Activated CD4-positive, alpha-beta T cell treated with anti-CD3 and anti-CD28 coated beads, Interleukin-2, amount 10 ng/mL, durations not matched to agents 24 days and 14 days (primary cell): ENCODE measurements at regions of chr6 and their contacts with region 1.

Region 1: GRCh38 chr6:21593412-21593926 is at the start of gene SOX4:
- DNase-seq: peak; percentile 88
- H3K4me3 Mint-ChIP-seq: peak within 1 kb of the TSS; percentile 83
- H3K27ac Mint-ChIP-seq: peak within 1 kb of the TSS; percentile 85
- H3K4me1 Mint-ChIP-seq: peaks cover 21% of the 10 kb centered on the region
- H3K27me3 Mint-ChIP-seq: peaks cover 45% of the 10 kb centered on the region
- total RNA-seq, gene SOX4: 0.79 and 0.95 TPM in 2 replicates

Region 2: GRCh38 chr6:20291764-20292580 is 1301.5 kb before region 1 on chr6:
- intact Hi-C with region 1: loop called (anchors 5 kb)
- DNase-seq: peak; percentile 93
- H3K4me3 Mint-ChIP-seq: peak overlapping the region; percentile 9
- H3K27ac Mint-ChIP-seq: peak overlapping the region; percentile 2
- H3K4me1 Mint-ChIP-seq: peaks cover 35% of the 10 kb centered on the region
- H3K27me3 Mint-ChIP-seq: peaks cover 7% of the 10 kb centered on the region

Region 3: DNA sequence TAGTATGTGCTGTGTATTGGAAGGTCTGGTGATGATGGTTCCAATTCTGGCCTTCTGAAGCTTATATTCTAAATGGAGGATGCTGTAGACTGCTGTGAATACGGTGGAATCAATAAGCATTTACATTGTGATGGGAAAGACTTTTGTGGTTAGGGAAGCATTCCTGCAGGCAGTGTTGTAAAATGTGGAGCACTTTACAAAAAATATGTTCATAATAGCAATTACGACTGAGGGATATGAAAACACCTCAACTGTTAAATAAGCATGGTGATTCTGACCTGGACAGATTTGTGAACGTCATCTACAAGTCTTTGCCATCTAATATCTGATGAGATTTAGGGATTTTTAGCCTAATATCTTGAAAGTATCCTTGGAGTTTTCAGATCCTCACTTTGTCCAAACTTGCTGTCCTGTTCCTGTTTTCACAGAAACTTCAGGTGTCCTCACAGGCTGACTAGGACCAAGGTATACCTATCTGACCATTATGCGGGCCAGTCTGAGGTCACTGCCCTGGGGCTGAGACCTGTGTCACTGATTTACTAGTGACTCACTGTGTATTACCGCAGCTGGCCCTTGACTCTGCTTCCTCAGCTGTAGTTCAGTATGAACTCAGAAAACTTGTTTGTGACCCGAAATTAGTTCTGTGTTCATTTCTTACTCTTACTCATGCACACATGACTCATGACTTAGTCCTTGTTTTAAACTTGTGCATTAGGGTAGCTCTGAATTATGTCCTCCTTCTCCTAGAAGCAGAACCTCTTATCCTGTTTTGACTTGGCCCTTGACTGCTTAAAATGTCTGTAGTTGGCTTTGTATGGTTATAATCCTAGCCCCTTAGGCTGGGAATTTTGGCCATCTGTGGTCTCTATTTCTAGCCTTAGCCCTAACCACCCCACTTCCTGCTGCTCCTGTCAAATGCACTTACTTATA is 716.2 kb before region 1 on chr6:
- intact Hi-C with region 1: loop called (anchors 2 kb)
- DNase-seq: peak; percentile 60
- H3K4me3 Mint-ChIP-seq: no peak overlapping the region
- H3K27ac Mint-ChIP-seq: peak overlapping the region; percentile 42
- H3K4me1 Mint-ChIP-seq: peaks cover 13% of the 10 kb centered on the region
- H3K27me3 Mint-ChIP-seq: no peaks in the 10 kb centered on the region

Region 4: GRCh38 chr6:21201637-21202350 is 391.7 kb before region 1 on chr6:
- intact Hi-C with region 1: no loop called
- DNase-seq: no peak
- H3K4me3 Mint-ChIP-seq: no peak overlapping the region
- H3K27ac Mint-ChIP-seq: no peak overlapping the region
- H3K4me1 Mint-ChIP-seq: peaks cover 6% of the 10 kb centered on the region
- H3K27me3 Mint-ChIP-seq: no peaks in the 10 kb centered on the region

Region 5: GRCh38 chr6:21664314-21665109 is 71.0 kb after region 1 on chr6:
- intact Hi-C with region 1: loop called (anchors 2 kb)
- DNase-seq: peak; percentile 57
- H3K4me3 Mint-ChIP-seq: peak overlapping the region; percentile 68
- H3K27ac Mint-ChIP-seq: no peak overlapping the region
- H3K4me1 Mint-ChIP-seq: peaks cover 24% of the 10 kb centered on the region
- H3K27me3 Mint-ChIP-seq: peaks cover 63% of the 10 kb centered on the region

Region 6: GRCh38 chr6:21922086-21922485 is 328.6 kb after region 1 on chr6:
- intact Hi-C with region 1: loop called (anchors 10 kb)
- DNase-seq: no peak
- H3K4me3 Mint-ChIP-seq: no peak overlapping the region
- H3K27ac Mint-ChIP-seq: no peak overlapping the region
- H3K4me1 Mint-ChIP-seq: peaks cover 13% of the 10 kb centered on the region
- H3K27me3 Mint-ChIP-seq: no peaks in the 10 kb centered on the region